Activated B cell treated with CpG ODN at 0.5 μM for 24 hours (primary cell): ENCODE measurements at regions of chr3 and their contacts with region 1.

Region 1: DNA sequence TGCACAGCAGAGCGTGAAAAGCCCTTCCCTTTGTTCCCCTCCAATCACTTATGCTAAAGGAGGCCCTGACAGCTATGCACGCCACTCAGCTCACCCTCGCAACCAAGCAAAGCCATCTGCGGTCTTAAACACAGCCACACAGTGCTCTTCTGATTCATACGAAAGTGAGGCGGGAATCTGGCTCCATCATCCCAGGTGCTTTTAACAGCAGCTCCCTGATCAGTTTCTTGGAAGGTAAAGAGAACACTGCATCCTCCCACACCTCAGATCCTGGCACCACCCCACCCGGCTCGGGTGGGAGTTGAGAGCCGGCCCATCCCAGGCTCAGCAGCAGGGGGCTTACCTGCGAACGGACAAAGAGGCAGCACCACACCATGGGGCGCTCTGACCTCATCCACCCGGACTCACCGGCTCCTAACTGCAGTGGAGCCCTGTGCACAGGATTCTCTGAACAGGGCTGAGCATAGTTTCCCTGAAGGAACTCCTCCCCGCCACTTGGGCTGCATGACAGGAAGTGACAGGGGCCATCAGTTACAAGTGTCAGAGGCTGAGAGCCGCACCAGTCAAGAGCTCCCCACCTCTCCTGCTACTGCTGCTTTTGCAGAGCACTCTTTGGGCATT is 114.3 kb upstream of the ARHGEF3 start:
- DNase-seq: peak; percentile 33
- ATAC-seq: peak; percentile 69
- H3K4me3 Mint-ChIP-seq: peak overlapping the region; percentile 84
- H3K27ac Mint-ChIP-seq: peak overlapping the region; percentile 95
- H3K4me1 Mint-ChIP-seq: peaks cover 61% of the 10 kb centered on the region
- H3K27me3 Mint-ChIP-seq: no peaks in the 10 kb centered on the region
- CTCF ChIP-seq: no peak

Region 2: GRCh38 chr3:56682462-56683121 is 233.5 kb before region 1 on chr3:
- CTCF ChIA-PET with region 1: no interaction called
- POLR2A ChIA-PET with region 1: interaction called, 5 read pairs
- intact Hi-C with region 1: loop called (anchors 2 kb)
- DNase-seq: peak; percentile 76
- ATAC-seq: peak; percentile 73
- H3K4me3 Mint-ChIP-seq: peak overlapping the region; percentile 97
- H3K27ac Mint-ChIP-seq: peak overlapping the region; percentile 97
- H3K4me1 Mint-ChIP-seq: peaks cover 49% of the 10 kb centered on the region
- H3K27me3 Mint-ChIP-seq: no peaks in the 10 kb centered on the region
- CTCF ChIP-seq: no peak

Region 3: GRCh38 chr3:56753206-56753820 is 162.8 kb before region 1 on chr3:
- CTCF ChIA-PET with region 1: no interaction called
- POLR2A ChIA-PET with region 1: interaction called, 3 read pairs
- intact Hi-C with region 1: loop called (anchors 1 kb)
- DNase-seq: no peak
- ATAC-seq: peak; percentile 64
- H3K4me3 Mint-ChIP-seq: peak overlapping the region; percentile 52
- H3K27ac Mint-ChIP-seq: peak overlapping the region; percentile 97
- H3K4me1 Mint-ChIP-seq: peaks cover 62% of the 10 kb centered on the region
- H3K27me3 Mint-ChIP-seq: no peaks in the 10 kb centered on the region
- CTCF ChIP-seq: no peak

Region 4: DNA sequence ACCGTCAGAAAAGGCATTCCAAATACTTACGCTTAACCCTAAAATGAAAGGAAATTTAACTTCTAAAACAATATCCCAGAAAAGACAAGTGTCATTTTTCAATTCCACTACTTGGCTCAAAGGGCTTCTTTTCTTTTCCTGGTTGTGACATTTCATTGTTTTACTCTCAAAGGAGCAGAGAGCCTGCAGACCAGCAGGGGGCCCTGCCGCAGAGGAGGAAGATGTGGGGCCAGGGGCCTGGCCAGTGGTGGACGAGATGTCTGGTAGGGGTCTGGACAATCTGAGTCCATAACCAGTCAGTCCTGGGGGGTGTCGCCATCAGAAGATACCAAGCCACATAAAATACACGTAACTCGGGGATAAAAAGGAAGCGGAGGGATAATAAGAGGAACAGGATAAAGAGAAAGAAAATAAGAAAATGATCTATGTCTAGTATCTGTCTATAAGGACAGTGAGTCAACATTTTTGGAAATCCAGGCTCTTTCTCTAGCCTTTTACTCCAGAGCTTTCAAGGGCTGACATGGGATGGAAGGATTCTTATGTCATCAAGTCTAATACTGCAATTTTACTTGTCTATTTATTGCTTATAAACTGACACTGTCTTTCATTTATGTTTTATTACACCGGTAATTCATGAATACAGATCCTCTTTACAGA is 60.1 kb before region 1 on chr3:
- CTCF ChIA-PET with region 1: no interaction called
- POLR2A ChIA-PET with region 1: interaction called, 5 read pairs
- intact Hi-C with region 1: loop called (anchors 2 kb)
- DNase-seq: peak; percentile 17
- ATAC-seq: peak; percentile 28
- H3K4me3 Mint-ChIP-seq: peak overlapping the region; percentile 16
- H3K27ac Mint-ChIP-seq: no peak overlapping the region
- H3K4me1 Mint-ChIP-seq: peaks cover 3% of the 10 kb centered on the region
- H3K27me3 Mint-ChIP-seq: no peaks in the 10 kb centered on the region
- CTCF ChIP-seq: no peak

Region 5: GRCh38 chr3:56970461-56970879 is 54.4 kb after region 1 on chr3:
- CTCF ChIA-PET with region 1: no interaction called
- POLR2A ChIA-PET with region 1: no interaction called
- intact Hi-C with region 1: loop called (anchors 2 kb)
- DNase-seq: no peak
- ATAC-seq: peak; percentile 37
- H3K4me3 Mint-ChIP-seq: no peak overlapping the region
- H3K27ac Mint-ChIP-seq: no peak overlapping the region
- H3K4me1 Mint-ChIP-seq: peaks cover 9% of the 10 kb centered on the region
- H3K27me3 Mint-ChIP-seq: no peaks in the 10 kb centered on the region
- CTCF ChIP-seq: no peak

Region 6: DNA sequence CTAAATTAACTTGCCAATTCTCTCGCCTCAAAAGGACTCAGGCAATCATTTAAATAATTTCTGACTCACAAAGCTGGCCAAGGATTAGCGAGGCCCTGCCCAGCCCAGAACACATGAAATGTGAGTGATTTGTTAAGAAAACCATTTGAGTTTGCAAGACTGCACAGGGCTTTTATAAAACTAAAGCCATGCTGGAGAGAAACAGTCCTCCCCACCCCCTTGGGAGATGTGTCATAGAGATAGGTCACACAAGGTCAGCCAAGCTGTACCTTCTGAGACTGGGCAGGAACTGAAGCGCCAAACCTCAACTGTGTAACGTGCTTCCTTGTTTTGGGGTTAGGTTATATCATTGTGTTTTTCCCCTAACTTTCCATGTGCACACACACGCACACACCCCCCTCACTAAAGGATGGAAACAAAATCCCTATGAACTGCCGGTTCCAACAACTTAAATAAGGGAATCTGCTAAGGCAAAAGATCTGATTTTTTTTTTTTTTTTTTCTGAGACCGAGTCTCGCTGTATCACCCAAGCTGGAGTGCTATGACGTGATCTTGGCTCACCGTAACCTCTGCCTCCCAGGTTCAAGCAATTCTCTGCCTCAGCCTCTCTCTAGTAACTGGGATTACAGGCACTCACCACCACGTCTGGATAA is 152.5 kb after region 1 on chr3:
- CTCF ChIA-PET with region 1: no interaction called
- POLR2A ChIA-PET with region 1: no interaction called
- intact Hi-C with region 1: loop called (anchors 1 kb)
- DNase-seq: peak; percentile 52
- ATAC-seq: peak; percentile 97
- H3K4me3 Mint-ChIP-seq: peak overlapping the region; percentile 62
- H3K27ac Mint-ChIP-seq: peak overlapping the region; percentile 88
- H3K4me1 Mint-ChIP-seq: peaks cover 27% of the 10 kb centered on the region
- H3K27me3 Mint-ChIP-seq: peaks cover 22% of the 10 kb centered on the region
- CTCF ChIP-seq: no peak

Region 7: GRCh38 chr3:57675530-57675929 is 759.5 kb after region 1 on chr3:
- CTCF ChIA-PET with region 1: no interaction called
- POLR2A ChIA-PET with region 1: no interaction called
- intact Hi-C with region 1: loop called (anchors 5 kb)
- DNase-seq: no peak
- ATAC-seq: peak; percentile 25
- H3K4me3 Mint-ChIP-seq: no peak overlapping the region
- H3K27ac Mint-ChIP-seq: peak overlapping the region; percentile 82
- H3K4me1 Mint-ChIP-seq: peaks cover 49% of the 10 kb centered on the region
- H3K27me3 Mint-ChIP-seq: no peaks in the 10 kb centered on the region
- CTCF ChIP-seq: no peak